ENCODE measurements at regions of chr1 and their contacts with region 1.

Region 1: GRCh38 chr1:67685067-67685557 is at the start of gene GADD45A:
- DNase-seq: peak; percentile 99
- H3K4me3 ChIP-seq: peak within 1 kb of the TSS; percentile 86
- H3K27ac ChIP-seq: peak within 1 kb of the TSS; percentile 57
- H3K4me1 ChIP-seq: peaks cover 48% of the 10 kb centered on the region
- CTCF ChIP-seq: no peak
- total RNA-seq, gene GADD45A: 46.8 and 60.7 TPM in 2 replicates

Region 2: DNA sequence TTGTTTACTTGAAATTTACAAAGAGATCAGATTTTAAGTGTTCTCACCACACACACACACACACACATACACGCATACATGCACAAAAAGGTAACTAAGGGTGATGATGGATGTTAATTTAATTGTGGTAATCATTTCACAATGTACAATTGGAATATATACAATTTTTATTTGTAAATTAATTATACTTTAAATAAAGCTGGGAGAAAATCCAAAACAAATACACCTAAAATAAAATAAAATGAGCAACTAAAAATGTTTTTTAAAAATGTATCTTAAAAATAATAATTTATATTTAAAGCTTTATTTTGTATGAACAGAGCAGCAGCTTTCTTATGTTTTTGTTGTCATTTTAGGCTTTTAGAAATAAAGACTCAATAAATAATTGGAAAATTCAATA is 875.9 kb before region 1 on chr1:
- CTCF ChIA-PET with region 1: no interaction called
- POLR2A ChIA-PET with region 1: no interaction called
- intact Hi-C with region 1: no loop called
- DNase-seq: no peak
- H3K4me3 ChIP-seq: no peak overlapping the region
- H3K27ac ChIP-seq: no peak overlapping the region
- H3K4me1 ChIP-seq: no peaks in the 10 kb centered on the region
- CTCF ChIP-seq: no peak

Region 3: GRCh38 chr1:66924756-66925557 is 760.2 kb before region 1 on chr1 and contains the starts of genes DNAI4 and MIER1:
- CTCF ChIA-PET with region 1: no interaction called
- POLR2A ChIA-PET with region 1: no interaction called
- intact Hi-C with region 1: loop called (anchors 10 kb)
- DNase-seq: peak; percentile 97
- H3K4me3 ChIP-seq: peak within 1 kb of the TSS; percentile 96
- H3K27ac ChIP-seq: peak within 1 kb of the TSS; percentile 70
- H3K4me1 ChIP-seq: peaks cover 45% of the 10 kb centered on the region
- CTCF ChIP-seq: 0 out of 2 replicates have a peak, but pooled peaks have one; percentile 34
- total RNA-seq, gene DNAI4: 1.9 and 6.1 TPM in 2 replicates
- total RNA-seq, gene MIER1: 24.4 and 38.0 TPM in 2 replicates

Region 4: GRCh38 chr1:67544921-67545320 is 140.2 kb before region 1 on chr1:
- CTCF ChIA-PET with region 1: no interaction called
- POLR2A ChIA-PET with region 1: no interaction called
- intact Hi-C with region 1: no loop called
- DNase-seq: no peak
- H3K4me3 ChIP-seq: no peak overlapping the region
- H3K27ac ChIP-seq: no peak overlapping the region
- H3K4me1 ChIP-seq: no peaks in the 10 kb centered on the region
- CTCF ChIP-seq: no peak

Region 5: GRCh38 chr1:67561704-67562113 is 123.4 kb before region 1 on chr1:
- CTCF ChIA-PET with region 1: no interaction called
- POLR2A ChIA-PET with region 1: interaction called, 8 read pairs
- intact Hi-C with region 1: loop called (anchors 1 kb)
- DNase-seq: peak; percentile 84
- H3K4me3 ChIP-seq: no peak overlapping the region
- H3K27ac ChIP-seq: no peak overlapping the region
- H3K4me1 ChIP-seq: peaks cover 4% of the 10 kb centered on the region
- CTCF ChIP-seq: peak; percentile 98

Region 6: GRCh38 chr1:67674260-67675011 is 10.7 kb before region 1 on chr1:
- CTCF ChIA-PET with region 1: interaction called, 10 read pairs
- POLR2A ChIA-PET with region 1: interaction called, 89 read pairs
- intact Hi-C with region 1: no loop called
- DNase-seq: peak; percentile 77
- H3K4me3 ChIP-seq: peak overlapping the region; percentile 20
- H3K27ac ChIP-seq: peak overlapping the region; percentile 85
- H3K4me1 ChIP-seq: peaks cover 48% of the 10 kb centered on the region
- CTCF ChIP-seq: no peak

Region 7: GRCh38 chr1:67723620-67724019 is 38.5 kb after region 1 on chr1:
- CTCF ChIA-PET with region 1: no interaction called
- POLR2A ChIA-PET with region 1: interaction called, 15 read pairs
- intact Hi-C with region 1: no loop called
- DNase-seq: no peak
- H3K4me3 ChIP-seq: no peak overlapping the region
- H3K27ac ChIP-seq: no peak overlapping the region
- H3K4me1 ChIP-seq: peaks cover 35% of the 10 kb centered on the region
- CTCF ChIP-seq: no peak

Region 8: DNA sequence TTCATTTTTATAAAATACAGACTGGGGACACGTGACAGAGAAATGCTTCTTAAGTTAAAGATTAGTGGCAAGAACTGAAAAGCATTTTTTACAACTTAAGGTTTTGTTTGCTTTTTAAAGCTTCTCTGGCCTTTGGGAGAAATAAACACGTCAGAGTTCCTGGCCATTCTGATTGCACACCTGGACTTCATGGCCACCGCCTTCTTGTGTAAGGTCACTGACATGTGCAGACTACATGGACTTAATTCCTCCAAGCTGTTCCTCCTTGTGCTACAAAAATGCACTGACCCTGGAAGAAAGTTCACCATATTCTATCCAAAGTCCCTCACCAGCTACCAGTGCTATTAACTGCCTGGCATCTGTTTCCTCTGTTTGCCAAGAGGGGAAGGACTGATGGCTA is 56.0 kb after region 1 on chr1:
- CTCF ChIA-PET with region 1: interaction called, 16 read pairs
- POLR2A ChIA-PET with region 1: interaction called, 123 read pairs
- intact Hi-C with region 1: loop called (anchors 1 kb)
- DNase-seq: no peak
- H3K4me3 ChIP-seq: no peak overlapping the region
- H3K27ac ChIP-seq: peak overlapping the region; percentile 84
- H3K4me1 ChIP-seq: peaks cover 78% of the 10 kb centered on the region
- CTCF ChIP-seq: 0 out of 2 replicates have a peak, but pooled peaks have one; percentile 2

Region 9: GRCh38 chr1:67760030-67760821 is 75.1 kb after region 1 on chr1:
- CTCF ChIA-PET with region 1: no interaction called
- POLR2A ChIA-PET with region 1: interaction called, 33 read pairs
- intact Hi-C with region 1: loop called (anchors 1 kb)
- DNase-seq: peak; percentile 84
- H3K4me3 ChIP-seq: no peak overlapping the region
- H3K27ac ChIP-seq: peak overlapping the region; percentile 39
- H3K4me1 ChIP-seq: peaks cover 30% of the 10 kb centered on the region
- CTCF ChIP-seq: peak; percentile 100

Region 10: DNA sequence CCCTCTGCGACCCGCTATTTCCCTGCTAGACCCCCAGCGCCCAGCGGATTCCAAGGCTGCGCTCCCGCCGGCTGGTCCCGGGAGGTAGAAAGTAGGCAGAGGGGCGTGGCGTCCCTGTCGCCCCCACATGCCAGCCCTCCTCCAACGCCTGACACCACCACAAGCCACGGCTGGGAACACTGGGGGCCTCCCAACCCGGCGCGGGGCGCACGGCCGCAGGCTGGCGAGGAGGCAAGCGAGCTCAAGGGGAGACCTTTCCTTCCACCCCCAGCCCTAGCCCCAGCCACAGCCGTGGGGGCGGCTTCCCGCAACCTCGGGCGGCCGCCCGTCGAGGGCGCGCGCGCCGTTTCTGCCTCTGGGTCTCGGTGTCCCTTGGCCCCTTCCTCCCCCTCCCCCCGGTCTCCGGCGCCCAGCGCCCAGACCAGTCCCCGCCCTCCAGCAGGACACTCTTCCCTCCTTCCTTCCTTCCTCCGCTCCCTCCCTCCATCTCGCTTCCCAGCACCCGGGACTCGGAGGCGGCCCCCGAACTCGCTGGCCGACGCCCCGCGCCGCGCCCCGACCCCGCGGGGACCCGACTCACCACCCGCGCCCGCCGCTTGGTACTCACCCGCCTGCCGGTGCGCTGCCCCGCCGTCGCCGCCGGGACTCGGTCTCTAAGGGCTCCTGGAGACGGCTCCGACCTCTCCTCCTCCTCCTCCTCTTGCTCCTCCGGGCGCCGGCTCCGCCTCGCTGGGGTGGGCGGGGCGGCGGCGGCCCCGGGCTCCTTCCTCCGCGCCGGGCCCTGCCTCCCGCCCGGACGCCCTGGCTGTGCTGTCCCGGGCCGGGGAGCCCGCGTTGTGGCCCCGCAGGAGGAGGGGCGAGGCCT is 147.9 kb after region 1 on chr1 and contains the start of gene GNG12:
- CTCF ChIA-PET with region 1: no interaction called
- POLR2A ChIA-PET with region 1: no interaction called
- intact Hi-C with region 1: no loop called
- DNase-seq: no peak
- H3K4me3 ChIP-seq: no peak within 1 kb of the TSS
- H3K27ac ChIP-seq: no peak within 1 kb of the TSS
- H3K4me1 ChIP-seq: no peaks in the 10 kb centered on the region
- CTCF ChIP-seq: no peak
- total RNA-seq, gene GNG12: not detected in 2 replicates

Measured in OCI-LY7 (cell line).